ENCODE measurements at regions of chr3 and their contacts with region 1.

Region 1: GRCh38 chr3:13091898-13092611 is 18.8 kb upstream of the IQSEC1 start:
- DNase-seq: peak; percentile 85
- CTCF ChIP-seq: peak; percentile 94

Region 2: GRCh38 chr3:13072239-13072599 is 19.8 kb before region 1 on chr3:
- CTCF ChIA-PET with region 1: interaction called, 13 read pairs
- POLR2A ChIA-PET with region 1: no interaction called
- DNase-seq: peak; percentile 73
- CTCF ChIP-seq: no peak

Region 3: DNA sequence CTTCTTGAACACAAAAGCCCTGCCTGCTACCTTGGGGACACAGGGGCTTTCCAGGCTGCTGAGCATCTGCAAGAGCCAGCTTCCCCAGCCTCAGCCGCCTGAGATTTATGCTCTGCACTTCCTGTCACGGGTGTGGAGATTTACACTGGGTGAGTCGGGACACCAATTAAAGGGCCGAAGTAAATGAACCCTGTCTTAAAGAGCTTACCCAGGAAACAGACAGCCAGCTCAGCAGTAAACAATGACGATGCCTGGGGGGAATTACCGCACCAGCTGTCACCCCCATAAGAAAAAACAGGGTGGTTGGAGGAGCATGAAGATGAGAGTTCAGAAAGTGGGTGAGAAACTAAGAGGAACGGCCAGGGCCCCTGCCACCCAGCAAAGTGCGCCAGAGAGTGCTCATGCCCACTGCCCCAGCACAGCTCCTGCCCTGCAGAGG is 18.6 kb after region 1 on chr3:
- CTCF ChIA-PET with region 1: interaction called, 22 read pairs
- POLR2A ChIA-PET with region 1: no interaction called
- DNase-seq: peak; percentile 75
- CTCF ChIP-seq: no peak

Region 4: DNA sequence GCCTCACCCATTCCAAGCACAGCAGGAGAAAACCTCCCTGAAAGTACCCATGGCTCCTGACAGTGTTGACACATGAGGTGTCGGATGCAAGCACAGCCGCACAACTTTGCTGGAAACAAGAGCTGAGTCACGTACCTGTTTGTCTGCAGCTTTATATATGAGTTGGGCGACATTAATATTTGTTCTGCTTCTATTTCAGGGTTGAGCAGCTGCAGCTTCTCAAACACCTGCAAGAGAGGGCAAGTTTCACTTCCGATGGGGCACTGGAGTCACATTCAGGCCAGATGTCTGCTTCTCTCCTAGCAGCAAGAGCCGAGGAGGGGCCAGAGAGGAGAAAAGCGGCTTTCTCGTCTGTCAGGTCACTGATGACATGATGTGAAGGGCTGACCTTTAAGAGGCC is 240.1 kb after region 1 on chr3:
- CTCF ChIA-PET with region 1: no interaction called
- POLR2A ChIA-PET with region 1: no interaction called
- DNase-seq: peak; percentile 82
- CTCF ChIP-seq: no peak

Region 5: GRCh38 chr3:13461169-13462158 is 369.4 kb after region 1 on chr3:
- CTCF ChIA-PET with region 1: interaction called, 97 read pairs
- POLR2A ChIA-PET with region 1: no interaction called
- DNase-seq: peak; percentile 73
- CTCF ChIP-seq: peak; percentile 59

Region 6: DNA sequence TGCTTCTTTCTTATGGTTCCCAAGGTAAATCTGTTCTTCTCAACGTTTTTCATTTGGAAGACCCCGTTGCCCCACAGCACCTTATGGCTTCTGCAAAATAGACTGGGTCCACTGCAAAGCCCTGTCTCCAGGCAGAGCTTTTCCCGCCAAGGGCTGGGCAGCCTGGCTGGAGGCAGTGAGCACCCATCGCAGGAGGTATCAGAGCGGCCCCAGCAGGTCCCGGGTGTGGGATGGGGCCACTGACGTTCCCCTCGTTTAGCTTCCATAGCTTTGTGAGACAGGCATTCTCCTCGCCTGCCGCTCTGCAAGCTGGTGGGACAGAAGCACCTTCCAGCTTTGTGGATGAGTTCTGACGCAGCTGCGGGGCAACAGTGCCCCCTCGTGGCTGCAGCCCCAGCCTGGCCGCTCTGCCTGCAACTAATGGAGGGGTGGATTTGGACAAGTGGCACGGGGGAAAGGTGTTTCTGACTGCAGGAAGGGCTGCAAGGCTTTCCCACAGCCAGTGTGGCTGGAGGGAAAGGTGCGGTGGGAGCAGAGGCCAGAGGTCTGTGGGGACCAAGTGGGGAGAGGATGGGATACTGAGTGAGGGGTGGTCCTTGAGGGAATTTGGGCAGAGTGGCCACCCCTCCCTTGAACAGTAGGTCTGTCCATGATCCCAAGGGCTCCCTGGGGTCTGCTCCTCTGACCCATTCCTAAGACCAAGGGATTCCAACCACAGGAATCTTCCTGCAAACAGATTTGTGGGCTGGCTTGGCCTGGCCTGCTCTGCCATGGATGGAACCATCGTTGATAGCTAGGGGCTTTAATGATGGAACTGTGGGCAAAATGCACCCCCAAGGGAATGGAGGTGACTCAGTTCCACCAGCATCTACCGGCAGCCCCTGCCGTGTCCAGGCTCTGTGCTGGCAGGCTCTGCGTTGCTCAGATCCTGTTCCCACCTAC is 556.3 kb after region 1 on chr3:
- CTCF ChIA-PET with region 1: interaction called, 43 read pairs
- POLR2A ChIA-PET with region 1: no interaction called
- DNase-seq: peak; percentile 88
- CTCF ChIP-seq: peak; percentile 98

Measured in GM10248 (cell line).